ENCODE measurements at regions of chr2 and their contacts with region 1.

Region 1: DNA sequence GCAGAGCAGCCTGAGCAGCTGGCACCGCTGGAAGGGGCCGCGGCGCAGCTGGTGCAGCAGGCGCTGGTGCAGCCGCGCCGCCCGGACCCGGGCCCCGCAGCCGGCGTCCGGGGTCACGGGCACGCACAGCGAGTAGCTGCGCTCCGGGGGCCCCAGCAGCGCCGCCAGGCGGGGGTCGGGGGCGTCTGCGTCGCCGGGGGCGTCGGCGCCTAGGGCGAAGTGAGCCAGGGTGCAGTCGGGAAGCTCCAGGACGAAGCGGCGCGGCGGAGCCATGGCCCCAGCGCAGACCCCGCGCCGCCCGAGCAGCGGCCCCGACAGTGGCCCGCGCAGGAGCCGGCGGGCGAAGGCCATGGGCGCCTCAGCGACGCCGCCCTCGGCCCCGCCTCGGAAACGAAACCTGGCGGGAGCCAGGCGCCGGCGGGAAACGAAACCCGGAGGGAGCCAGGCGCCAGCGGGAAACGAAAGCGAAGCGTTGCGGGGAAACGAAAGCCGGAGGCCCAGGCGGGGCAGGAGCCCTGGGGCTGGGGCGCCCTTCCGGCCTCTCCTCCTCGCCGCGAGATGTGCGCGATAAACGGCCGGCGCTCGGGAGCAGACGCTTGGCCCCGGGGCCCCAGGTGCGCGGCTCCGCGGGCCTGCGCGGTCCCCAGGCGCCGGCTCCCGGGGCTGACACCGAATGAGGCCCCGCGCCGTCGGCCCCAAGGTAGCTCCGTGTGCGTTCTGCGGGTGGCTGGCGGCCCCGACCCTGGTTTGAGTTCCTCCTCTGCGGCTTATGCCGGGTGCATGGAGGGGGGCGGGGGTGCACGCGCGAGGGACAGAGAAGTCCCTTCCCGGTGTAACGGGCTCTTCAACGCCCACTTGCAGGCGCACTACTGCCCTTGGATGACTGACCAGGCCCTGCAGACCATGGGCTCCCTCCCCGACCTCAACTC is at the start of gene CMPK2:
- DNase-seq: peak; percentile 78 to 92 (median 92)
- H3K4me3 ChIP-seq: peak within 1 kb of the TSS; percentile 75 to 96 (median 86)
- H3K27ac ChIP-seq: peak within 1 kb of the TSS; percentile 56 to 78
- H3K4me1 ChIP-seq: peaks cover 15 to 35% (median 23%) of the 10 kb centered on the region in 4 experiments
- H3K27me3 ChIP-seq: no peaks in the 10 kb centered on the region

Region 2: GRCh38 chr2:6773007-6773693 is 92.5 kb before region 1 on chr2:
- CTCF ChIA-PET with region 1: no interaction called
- POLR2A ChIA-PET with region 1: no interaction called
- DNase-seq: peak; percentile 41 to 71 (median 69)
- H3K4me3 ChIP-seq: no peak overlapping the region
- H3K27ac ChIP-seq: no peak overlapping the region
- H3K4me1 ChIP-seq: peaks cover 0 to 3% (median 1%) of the 10 kb centered on the region in 4 experiments
- H3K27me3 ChIP-seq: peaks cover 0 to 39% (median 9%) of the 10 kb centered on the region in 5 experiments

Region 3: GRCh38 chr2:6877402-6878304 is 12.0 kb after region 1 on chr2 and contains the start of gene RSAD2:
- CTCF ChIA-PET with region 1: interaction called, 69 read pairs
- POLR2A ChIA-PET with region 1: no interaction called
- DNase-seq: peak; percentile 68 to 86 (median 81)
- H3K4me3 ChIP-seq: peak within 1 kb of the TSS in 6 of 7 experiments; percentile 58 to 89 (median 74)
- H3K27ac ChIP-seq: peak within 1 kb of the TSS; percentile 16 to 67
- H3K4me1 ChIP-seq: peaks cover 27 to 74% (median 58%) of the 10 kb centered on the region in 4 experiments
- H3K27me3 ChIP-seq: no peaks in the 10 kb centered on the region

Region 4: DNA sequence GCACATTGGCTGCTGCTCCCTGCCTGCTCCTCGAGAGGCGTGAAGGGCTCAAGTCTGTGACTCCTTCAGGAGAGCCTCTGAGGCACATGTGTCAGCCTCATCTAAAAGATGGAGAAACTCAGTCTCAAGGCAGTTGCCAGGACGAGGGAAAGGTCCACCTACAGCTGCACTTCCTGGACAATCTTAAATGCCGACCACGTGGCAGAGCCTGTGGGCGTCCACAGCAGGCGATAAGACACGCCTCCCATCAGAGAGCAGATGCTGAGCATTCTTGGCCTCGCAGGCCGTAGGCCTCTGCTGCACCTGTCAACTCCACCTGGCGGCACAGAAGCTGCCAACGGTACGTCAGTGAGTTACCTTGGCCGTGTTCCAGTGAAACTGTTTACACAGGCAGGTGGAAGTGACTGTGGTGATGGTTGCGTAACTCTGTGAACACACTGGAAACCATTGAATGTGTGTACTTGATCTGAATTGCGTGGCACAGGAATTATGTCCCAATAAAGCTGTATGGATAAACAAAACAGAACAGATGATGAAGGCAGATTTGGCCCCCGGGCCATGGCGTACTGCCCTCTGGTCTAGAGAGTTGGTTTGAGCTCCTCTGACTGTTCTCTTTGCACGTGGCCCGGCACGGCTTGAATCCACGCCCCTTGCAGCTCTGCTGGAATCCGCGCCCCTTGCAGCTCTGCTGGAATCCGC is 166.1 kb after region 1 on chr2:
- CTCF ChIA-PET with region 1: no interaction called
- POLR2A ChIA-PET with region 1: no interaction called
- DNase-seq: peak; percentile 67 to 85 (median 83)
- H3K4me3 ChIP-seq: no peak overlapping the region
- H3K27ac ChIP-seq: no peak overlapping the region
- H3K4me1 ChIP-seq: peaks cover 0 to 33% (median 8%) of the 10 kb centered on the region in 4 experiments
- H3K27me3 ChIP-seq: no peaks in the 10 kb centered on the region

Measured in common myeloid progenitor, CD34-positive (primary cell).